ENCODE measurements at regions of chr2 and their contacts with region 1.

Region 1: GRCh38 chr2:109545828-109546713 is 67.7 kb downstream of the SEPTIN10 start:
- DNase-seq: peak; percentile 76
- ATAC-seq: peak; percentile 74
- H3K4me3 Mint-ChIP-seq: no peak overlapping the region
- H3K27ac Mint-ChIP-seq: no peak overlapping the region
- H3K4me1 Mint-ChIP-seq: no peaks in the 10 kb centered on the region
- H3K27me3 Mint-ChIP-seq: no peaks in the 10 kb centered on the region

Region 2: GRCh38 chr2:108124736-108125495 is 1421.2 kb before region 1 on chr2:
- CTCF ChIA-PET with region 1: no interaction called
- POLR2A ChIA-PET with region 1: no interaction called
- intact Hi-C with region 1: no loop called
- DNase-seq: no peak
- ATAC-seq: no peak
- H3K4me3 Mint-ChIP-seq: no peak overlapping the region
- H3K27ac Mint-ChIP-seq: no peak overlapping the region
- H3K4me1 Mint-ChIP-seq: no peaks in the 10 kb centered on the region
- H3K27me3 Mint-ChIP-seq: no peaks in the 10 kb centered on the region

Region 3: GRCh38 chr2:109510136-109511028 is 35.7 kb before region 1 on chr2:
- CTCF ChIA-PET with region 1: interaction called, 13 read pairs
- POLR2A ChIA-PET with region 1: no interaction called
- intact Hi-C with region 1: no loop called
- DNase-seq: peak; percentile 86
- ATAC-seq: peak; percentile 79
- H3K4me3 Mint-ChIP-seq: no peak overlapping the region
- H3K27ac Mint-ChIP-seq: no peak overlapping the region
- H3K4me1 Mint-ChIP-seq: no peaks in the 10 kb centered on the region
- H3K27me3 Mint-ChIP-seq: no peaks in the 10 kb centered on the region

Region 4: DNA sequence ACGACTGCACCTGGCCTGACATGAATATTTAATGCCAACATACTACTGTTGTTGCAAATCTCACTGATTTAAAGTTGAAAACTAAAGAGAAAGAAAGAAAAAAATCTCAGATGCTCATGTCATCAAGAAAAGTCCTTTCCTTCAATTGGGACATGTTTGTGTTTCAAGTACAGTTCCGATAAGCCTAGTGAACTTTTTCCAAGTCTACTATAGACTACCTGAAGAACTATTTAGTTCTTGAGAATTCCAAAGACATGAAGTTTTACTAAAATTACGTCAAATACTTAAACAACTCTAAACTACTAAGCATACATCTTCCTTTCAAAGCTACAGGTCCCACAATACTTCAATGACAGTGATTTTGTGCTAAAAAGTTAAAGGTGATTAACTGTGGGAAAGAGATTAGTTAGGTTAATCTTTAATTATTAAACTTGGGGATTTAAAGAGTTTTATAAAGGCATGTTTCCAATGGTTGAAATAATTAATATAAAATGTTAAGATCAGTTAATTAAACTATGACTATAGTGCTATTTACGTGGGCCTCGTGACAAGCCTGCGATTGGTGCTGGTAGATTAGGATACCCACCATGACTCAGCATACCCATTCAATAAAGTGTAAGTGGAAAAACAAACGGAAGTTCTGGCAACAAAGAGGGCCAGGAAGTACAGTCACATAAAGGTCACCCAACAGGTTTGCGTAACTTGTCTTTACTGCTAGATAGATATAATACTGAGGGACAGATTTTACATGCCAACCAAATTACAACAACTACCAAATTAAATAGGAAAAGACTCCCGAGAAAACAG is 12.2 kb after region 1 on chr2:
- CTCF ChIA-PET with region 1: interaction called, 14 read pairs
- POLR2A ChIA-PET with region 1: no interaction called
- intact Hi-C with region 1: no loop called
- DNase-seq: peak; percentile 21
- ATAC-seq: peak; percentile 71
- H3K4me3 Mint-ChIP-seq: no peak overlapping the region
- H3K27ac Mint-ChIP-seq: no peak overlapping the region
- H3K4me1 Mint-ChIP-seq: peaks cover 12% of the 10 kb centered on the region
- H3K27me3 Mint-ChIP-seq: no peaks in the 10 kb centered on the region

Region 5: GRCh38 chr2:109629831-109630230 is 83.8 kb after region 1 on chr2:
- CTCF ChIA-PET with region 1: interaction called, 10 read pairs
- POLR2A ChIA-PET with region 1: no interaction called
- intact Hi-C with region 1: no loop called
- DNase-seq: no peak
- ATAC-seq: no peak
- H3K4me3 Mint-ChIP-seq: no peak overlapping the region
- H3K27ac Mint-ChIP-seq: no peak overlapping the region
- H3K4me1 Mint-ChIP-seq: peaks cover 4% of the 10 kb centered on the region
- H3K27me3 Mint-ChIP-seq: peaks cover 5% of the 10 kb centered on the region

Region 6: GRCh38 chr2:109715313-109715805 is 169.3 kb after region 1 on chr2:
- CTCF ChIA-PET with region 1: interaction called, 8 read pairs
- POLR2A ChIA-PET with region 1: no interaction called
- intact Hi-C with region 1: loop called in 1 of 2 experiments (anchors 5 kb)
- DNase-seq: peak; percentile 12
- ATAC-seq: no peak
- H3K4me3 Mint-ChIP-seq: no peak overlapping the region
- H3K27ac Mint-ChIP-seq: no peak overlapping the region
- H3K4me1 Mint-ChIP-seq: no peaks in the 10 kb centered on the region
- H3K27me3 Mint-ChIP-seq: peaks cover 2% of the 10 kb centered on the region

Region 7: DNA sequence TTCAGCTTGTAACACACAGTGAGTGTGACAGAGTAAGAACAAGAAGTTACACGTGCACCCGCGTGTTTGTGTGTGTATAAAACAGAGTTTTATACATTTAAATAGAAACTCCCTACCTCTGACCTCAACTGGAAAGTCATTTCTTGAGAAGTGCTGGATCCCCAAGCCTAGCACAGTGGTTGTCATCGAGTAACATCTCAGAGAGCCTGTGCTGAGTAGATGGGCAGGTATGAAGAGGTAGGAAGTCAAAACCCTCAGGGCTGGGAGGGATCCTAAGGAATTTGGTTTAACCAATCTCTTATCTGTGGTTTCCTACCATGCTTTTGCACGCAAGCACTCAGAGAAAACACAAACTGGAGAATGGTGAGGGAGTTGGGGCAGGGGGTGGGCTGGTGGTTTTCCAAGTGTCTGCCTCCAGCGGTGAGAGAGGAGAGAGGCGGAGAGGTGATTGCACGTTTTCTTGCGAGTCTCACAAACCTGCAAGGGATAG is 1195.5 kb after region 1 on chr2:
- CTCF ChIA-PET with region 1: no interaction called
- POLR2A ChIA-PET with region 1: no interaction called
- intact Hi-C with region 1: no loop called
- DNase-seq: peak; percentile 17
- ATAC-seq: peak; percentile 76
- H3K4me3 Mint-ChIP-seq: no peak overlapping the region
- H3K27ac Mint-ChIP-seq: no peak overlapping the region
- H3K4me1 Mint-ChIP-seq: peaks cover 4% of the 10 kb centered on the region
- H3K27me3 Mint-ChIP-seq: peaks cover 79% of the 10 kb centered on the region

Measured in activated CD4-positive, alpha-beta T cell treated with anti-CD3 and anti-CD28 coated beads for 36 hours (primary cell).